HEK293 (cell line): ENCODE measurements at regions of chr11 and their contacts with region 1.

Region 1: DNA sequence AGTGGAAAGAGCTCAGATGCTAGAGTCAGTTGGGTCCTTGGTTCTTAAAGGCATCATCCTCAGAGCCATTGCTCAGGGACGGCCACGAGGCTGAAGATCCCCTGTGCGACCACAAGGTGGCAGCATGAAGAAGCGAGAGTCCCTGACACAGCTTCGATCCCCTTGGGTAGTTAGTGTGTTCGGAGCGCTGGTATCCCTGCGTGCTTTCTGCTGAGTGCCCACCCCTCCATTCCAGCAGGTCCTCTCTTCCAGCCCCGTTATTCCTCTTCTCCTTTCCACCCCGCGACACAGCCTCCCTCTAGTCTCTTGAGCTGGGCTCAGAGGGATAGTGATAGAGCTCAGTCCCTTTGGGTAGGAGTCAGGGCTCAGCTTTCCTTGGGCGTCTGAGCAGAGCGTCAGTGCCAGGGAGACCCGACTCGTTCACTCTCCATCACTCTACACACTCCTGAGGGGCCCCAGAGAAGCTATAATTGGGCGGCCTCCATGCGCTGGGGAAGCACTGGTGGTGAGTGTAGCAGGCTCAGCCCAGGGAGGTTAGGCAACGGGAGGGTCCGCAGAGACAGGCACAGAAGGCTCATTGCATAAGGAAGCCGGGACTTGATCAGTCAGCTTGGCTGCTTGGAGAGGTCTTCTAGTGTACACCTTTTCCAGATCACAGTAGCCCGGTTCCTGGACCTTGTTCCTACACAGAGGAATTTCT is at the start of gene OR51D1:
- H3K4me3 ChIP-seq: peak within 1 kb of the TSS; percentile 14
- H3K27ac ChIP-seq: no peak within 1 kb of the TSS
- H3K4me1 ChIP-seq: no peaks in the 10 kb centered on the region
- CTCF ChIP-seq: peak; percentile 78

Region 2: DNA sequence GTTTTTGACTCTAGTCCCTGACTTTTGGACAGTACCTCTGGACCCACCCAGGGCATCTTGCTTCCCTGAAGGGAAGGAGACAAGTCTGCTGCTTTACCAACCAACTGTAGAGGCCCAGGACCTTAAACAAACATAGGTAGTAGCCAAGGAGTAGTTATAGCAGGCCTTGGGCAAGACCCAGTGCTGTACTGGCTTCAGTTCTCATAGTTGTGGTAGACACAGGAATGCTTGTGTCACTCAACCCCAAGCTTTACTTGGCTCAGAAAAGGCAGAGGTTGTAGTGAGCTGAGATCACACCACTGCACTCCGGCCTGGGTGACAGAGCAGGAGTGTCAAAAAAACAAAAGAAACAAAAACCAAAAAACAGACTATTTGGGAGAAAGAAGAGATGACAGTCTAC is 113.4 kb before region 1 on chr11:
- CTCF ChIA-PET with region 1: no interaction called
- POLR2A ChIA-PET with region 1: no interaction called
- H3K4me3 ChIP-seq: no peak overlapping the region
- H3K27ac ChIP-seq: no peak overlapping the region
- H3K4me1 ChIP-seq: no peaks in the 10 kb centered on the region
- CTCF ChIP-seq: no peak

Region 3: DNA sequence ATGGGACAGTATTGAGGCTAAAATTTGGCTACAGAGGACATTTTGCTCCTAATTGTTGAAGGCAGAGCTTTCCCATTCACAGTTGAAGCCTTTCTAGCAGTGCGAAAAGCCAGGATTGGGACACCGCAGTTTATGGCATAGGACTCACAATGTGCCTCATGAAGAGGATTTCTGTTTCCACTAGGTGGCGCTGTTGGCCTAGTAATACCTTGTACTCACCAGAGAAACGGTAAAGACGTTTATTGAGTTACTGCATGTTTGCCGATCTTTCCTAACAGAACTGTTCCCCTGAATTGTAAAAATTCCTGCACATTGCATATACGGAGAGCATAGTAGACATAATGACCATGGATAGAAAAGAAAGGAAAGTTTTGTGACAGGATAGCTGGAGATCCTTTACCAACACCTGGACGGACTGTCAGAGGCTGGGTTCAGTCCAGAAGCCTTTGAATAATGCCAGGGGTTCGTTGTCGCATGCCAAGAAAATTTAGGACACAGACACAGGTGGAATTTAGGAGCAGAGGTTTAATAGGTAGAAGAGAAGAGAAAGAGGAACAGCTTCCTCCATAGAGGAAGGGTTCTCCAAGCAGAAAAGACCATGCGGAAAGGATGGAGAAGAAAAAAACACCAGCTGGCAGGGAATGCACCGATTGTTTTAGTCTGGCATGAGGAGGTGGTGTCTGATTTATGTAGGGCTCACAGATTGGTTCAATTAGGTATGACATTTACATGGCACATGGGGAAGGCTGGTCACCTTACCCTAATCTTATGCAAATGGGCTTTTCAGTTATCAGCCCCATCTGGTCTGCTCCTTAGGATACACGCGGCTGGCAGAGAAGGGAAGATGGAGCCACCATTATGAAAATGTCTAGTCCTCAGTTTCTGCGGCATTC is 10.7 kb before region 1 on chr11:
- CTCF ChIA-PET with region 1: interaction called, 42 read pairs
- POLR2A ChIA-PET with region 1: no interaction called
- H3K4me3 ChIP-seq: no peak overlapping the region
- H3K27ac ChIP-seq: no peak overlapping the region
- H3K4me1 ChIP-seq: no peaks in the 10 kb centered on the region
- CTCF ChIP-seq: no peak

Region 4: DNA sequence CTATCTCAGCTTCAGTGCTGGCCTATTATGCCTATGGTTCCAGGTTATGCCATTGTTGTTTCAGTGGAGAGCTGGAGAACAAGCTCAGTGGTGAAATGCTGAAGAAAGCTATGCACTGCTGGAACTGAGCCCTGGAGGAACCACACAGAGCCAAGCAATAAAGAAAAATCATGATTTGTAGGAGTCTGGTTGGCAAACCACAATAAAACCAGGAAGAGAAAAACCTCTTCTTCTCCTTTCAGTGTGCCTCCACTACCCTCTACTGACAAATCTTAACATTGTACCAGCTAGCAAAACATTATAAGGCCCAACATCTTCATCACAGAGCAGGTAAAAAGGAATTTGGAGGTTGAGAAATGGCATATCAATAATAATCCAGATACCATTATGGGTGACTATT is 189.3 kb after region 1 on chr11:
- CTCF ChIA-PET with region 1: interaction called, 22 read pairs
- POLR2A ChIA-PET with region 1: no interaction called
- H3K4me3 ChIP-seq: no peak overlapping the region
- H3K27ac ChIP-seq: no peak overlapping the region
- H3K4me1 ChIP-seq: no peaks in the 10 kb centered on the region
- CTCF ChIP-seq: no peak

Region 5: GRCh38 chr11:5004424-5005274 is 367.5 kb after region 1 on chr11:
- CTCF ChIA-PET with region 1: interaction called, 24 read pairs
- POLR2A ChIA-PET with region 1: no interaction called
- H3K4me3 ChIP-seq: no peak overlapping the region
- H3K27ac ChIP-seq: no peak overlapping the region
- H3K4me1 ChIP-seq: no peaks in the 10 kb centered on the region
- CTCF ChIP-seq: no peak